ENCODE measurements at regions of chr5 and their contacts with region 1.

Region 1: DNA sequence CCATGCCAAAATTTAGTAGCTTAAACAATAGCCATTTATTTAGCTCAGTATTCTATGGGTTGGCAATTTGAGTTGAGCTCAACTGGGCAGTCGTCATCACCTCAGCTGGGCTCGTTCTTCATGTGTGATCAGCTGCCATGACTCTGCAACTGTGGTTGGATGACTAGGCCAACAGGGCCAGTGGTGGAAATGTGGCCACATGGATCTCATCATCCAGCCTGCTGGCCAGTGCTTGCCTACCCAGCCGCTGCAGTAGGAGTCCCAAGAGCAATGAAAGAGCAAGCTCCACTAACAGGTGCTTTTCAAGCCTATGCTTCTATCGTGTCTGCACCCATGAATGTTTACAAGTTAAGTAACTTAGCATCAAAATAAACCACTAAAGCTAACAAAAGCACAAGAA is 158.0 kb downstream of the ATPSCKMT start:
- DNase-seq: no peak
- H3K4me3 ChIP-seq: no peak overlapping the region
- H3K27ac ChIP-seq: no peak overlapping the region
- H3K4me1 ChIP-seq: no peaks in the 10 kb centered on the region
- H3K27me3 ChIP-seq: no peaks in the 10 kb centered on the region
- CTCF ChIP-seq: no peak
- EP300 ChIP-seq: no peak
- POLR2A ChIP-seq: no peak

Region 2: DNA sequence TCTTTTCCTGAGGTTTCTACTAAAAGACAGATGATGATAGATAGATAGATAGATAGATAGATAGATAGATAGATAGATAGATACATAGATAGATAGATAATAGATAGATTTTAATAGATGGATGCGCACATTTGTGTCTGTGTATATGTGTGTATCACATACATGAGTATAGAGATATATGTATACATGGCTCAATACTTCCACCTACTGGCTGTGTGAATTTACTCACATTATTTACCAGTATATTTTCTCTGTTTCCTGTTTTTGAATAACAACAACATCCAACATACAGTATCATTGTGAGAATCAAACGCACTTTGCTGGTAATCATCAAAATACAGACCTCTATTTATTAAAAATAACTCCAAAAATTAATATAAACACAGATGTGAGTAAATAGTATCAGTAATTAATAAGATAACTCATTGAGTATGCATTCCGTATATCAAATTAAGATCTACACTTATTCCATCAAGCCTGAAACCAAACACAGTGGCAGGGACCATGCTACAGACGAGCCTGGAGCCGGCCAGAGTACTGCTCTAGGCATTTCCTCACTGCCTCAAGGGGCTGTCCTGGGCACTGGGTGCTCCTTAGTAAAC is 883.8 kb before region 1 on chr5:
- in situ Hi-C with region 1: no loop called
- intact Hi-C with region 1: no loop called
- DNase-seq: no peak
- H3K4me3 ChIP-seq: no peak overlapping the region
- H3K27ac ChIP-seq: no peak overlapping the region
- H3K4me1 ChIP-seq: no peaks in the 10 kb centered on the region
- H3K27me3 ChIP-seq: no peaks in the 10 kb centered on the region
- CTCF ChIP-seq: peak; percentile 32 to 56 (median 47)
- EP300 ChIP-seq: no peak
- POLR2A ChIP-seq: no peak

Region 3: GRCh38 chr5:10056228-10056760 is 35.4 kb before region 1 on chr5:
- in situ Hi-C with region 1: no loop called
- intact Hi-C with region 1: loop called (anchors 1 kb)
- DNase-seq: no peak
- H3K4me3 ChIP-seq: no peak overlapping the region
- H3K27ac ChIP-seq: no peak overlapping the region
- H3K4me1 ChIP-seq: no peaks in the 10 kb centered on the region
- H3K27me3 ChIP-seq: no peaks in the 10 kb centered on the region
- CTCF ChIP-seq: no peak
- EP300 ChIP-seq: no peak
- POLR2A ChIP-seq: no peak

Region 4: DNA sequence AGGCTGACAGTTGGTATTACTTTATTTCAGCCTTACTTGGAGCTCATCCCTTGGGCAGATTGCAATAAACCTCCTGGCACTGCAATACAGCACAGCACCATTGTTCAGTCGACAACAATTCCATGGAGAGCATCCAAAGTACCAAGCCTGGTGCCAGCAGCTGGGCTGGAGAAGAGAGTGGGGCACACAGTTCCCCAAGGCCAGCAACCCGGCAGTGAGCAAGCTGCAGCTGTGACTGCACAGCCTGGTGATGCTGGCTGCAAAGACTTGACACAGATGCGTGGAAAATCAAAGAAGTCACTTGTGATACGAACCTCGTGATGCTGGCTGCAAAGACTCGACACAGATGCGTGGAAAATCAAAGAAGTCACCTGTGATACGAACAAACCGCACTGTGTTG is 32.6 kb after region 1 on chr5:
- in situ Hi-C with region 1: no loop called
- intact Hi-C with region 1: loop called (anchors 2 kb)
- DNase-seq: no peak
- H3K4me3 ChIP-seq: no peak overlapping the region
- H3K27ac ChIP-seq: no peak overlapping the region
- H3K4me1 ChIP-seq: no peaks in the 10 kb centered on the region
- H3K27me3 ChIP-seq: no peaks in the 10 kb centered on the region
- CTCF ChIP-seq: no peak
- EP300 ChIP-seq: no peak
- POLR2A ChIP-seq: no peak